Natural killer cell (primary cell): ENCODE measurements at regions of chr19 and their contacts with region 1.

Region 1: DNA sequence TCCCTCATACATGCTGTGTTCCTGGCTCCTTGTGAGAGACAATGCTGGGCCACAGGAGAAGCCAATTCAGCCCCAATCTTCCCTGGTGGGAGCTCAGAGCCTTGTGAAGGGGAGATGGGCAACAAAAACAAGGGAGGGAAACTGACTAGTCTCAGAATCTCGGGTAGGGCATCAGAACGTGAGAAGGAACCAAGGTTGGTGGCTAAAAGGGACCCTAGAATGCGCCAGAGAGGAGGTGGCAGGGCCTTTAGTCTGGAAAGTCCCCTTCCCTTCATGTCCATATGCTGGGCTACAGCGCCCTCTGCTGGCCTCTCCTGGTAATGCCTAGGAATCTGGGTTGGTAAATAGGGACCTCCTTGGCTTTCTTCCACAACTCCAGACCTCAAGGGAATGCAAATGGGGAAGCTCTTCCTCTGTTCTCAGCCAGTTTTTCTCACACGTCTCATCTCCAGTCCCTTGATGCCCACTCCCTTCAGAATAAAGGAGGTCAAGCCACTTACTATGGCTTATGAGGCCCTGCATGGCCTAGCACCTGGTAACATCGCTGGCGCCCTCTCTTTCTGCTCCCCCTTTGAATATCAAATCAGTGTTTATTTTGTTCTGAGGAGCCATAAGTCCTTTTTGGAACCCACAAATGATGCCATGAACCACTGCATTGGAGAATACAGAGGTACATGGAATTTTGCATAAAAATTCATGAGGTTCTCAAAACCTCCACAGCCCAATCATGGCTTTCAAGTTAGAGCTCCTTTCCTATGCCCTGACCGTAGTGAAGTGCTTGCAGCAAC is 1.4 kb upstream of the CCDC97 start:
- DNase-seq: peak; percentile 96 to 97
- ATAC-seq: peak; percentile 62 to 88 (median 66)
- H3K4me3 ChIP-seq: no peak overlapping the region
- H3K4me3 Mint-ChIP-seq: peak overlapping the region; percentile 96
- H3K27ac ChIP-seq: peak overlapping the region; percentile 97
- H3K27ac Mint-ChIP-seq: peak overlapping the region; percentile 91 to 94
- H3K4me1 ChIP-seq: peaks cover 76% of the 10 kb centered on the region
- H3K4me1 Mint-ChIP-seq: peaks cover 84% of the 10 kb centered on the region in 2 donors
- H3K27me3 ChIP-seq: no peaks in the 10 kb centered on the region
- H3K27me3 Mint-ChIP-seq: no peaks in the 10 kb centered on the region
- CTCF ChIP-seq: peak; percentile 90

Region 2: DNA sequence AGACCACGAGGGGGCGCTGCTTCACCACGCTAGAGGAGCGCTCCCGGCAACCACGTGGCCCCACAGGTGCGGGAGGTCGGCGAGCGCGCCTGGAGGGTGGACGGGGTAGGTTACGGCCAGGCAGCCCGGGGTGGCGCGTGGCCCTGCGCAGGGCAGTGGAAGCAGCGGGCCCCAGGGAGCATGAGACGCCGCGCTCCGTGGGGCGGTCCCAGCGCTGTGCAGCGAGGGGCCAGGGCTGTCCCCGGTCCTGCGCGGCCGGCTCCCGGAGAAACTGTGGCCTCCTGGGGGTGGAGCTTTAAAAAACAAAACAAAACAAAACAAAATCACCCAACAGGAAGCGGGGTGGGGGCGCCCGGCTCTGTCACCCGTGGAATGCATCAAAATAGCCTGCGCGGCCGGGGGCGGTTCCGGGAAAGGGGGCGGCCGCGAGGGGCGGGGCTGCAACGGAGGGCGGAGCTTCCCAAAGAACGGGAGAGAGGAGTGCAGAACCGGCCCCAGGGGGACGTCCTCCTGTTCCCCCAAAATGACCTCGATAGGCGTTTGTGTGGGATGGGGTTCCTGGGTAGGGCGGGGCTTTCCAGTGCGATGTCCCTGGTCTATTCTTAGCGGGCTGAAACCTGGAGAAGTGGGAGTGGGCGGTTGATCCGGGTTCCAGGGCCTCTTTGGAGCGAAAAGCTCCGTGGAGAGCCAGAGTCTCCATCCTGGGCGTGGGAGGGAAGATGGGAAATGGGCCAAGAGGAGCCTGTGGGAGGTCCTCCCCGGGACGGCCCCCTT is 645.5 kb before region 1 on chr19:
- intact Hi-C with region 1: loop called (anchors 2 kb)
- DNase-seq: peak; percentile 95 to 96
- ATAC-seq: peak; percentile 83 to 96 (median 89)
- H3K4me3 ChIP-seq: peak overlapping the region; percentile 55
- H3K4me3 Mint-ChIP-seq: peak overlapping the region; percentile 85
- H3K27ac ChIP-seq: peak overlapping the region; percentile 52
- H3K27ac Mint-ChIP-seq: peak overlapping the region; percentile 60 to 83
- H3K4me1 ChIP-seq: peaks cover 15% of the 10 kb centered on the region
- H3K4me1 Mint-ChIP-seq: peaks cover 0 to 17% of the 10 kb centered on the region in 2 donors
- H3K27me3 ChIP-seq: no peaks in the 10 kb centered on the region
- H3K27me3 Mint-ChIP-seq: no peaks in the 10 kb centered on the region
- CTCF ChIP-seq: peak; percentile 42

Region 3: DNA sequence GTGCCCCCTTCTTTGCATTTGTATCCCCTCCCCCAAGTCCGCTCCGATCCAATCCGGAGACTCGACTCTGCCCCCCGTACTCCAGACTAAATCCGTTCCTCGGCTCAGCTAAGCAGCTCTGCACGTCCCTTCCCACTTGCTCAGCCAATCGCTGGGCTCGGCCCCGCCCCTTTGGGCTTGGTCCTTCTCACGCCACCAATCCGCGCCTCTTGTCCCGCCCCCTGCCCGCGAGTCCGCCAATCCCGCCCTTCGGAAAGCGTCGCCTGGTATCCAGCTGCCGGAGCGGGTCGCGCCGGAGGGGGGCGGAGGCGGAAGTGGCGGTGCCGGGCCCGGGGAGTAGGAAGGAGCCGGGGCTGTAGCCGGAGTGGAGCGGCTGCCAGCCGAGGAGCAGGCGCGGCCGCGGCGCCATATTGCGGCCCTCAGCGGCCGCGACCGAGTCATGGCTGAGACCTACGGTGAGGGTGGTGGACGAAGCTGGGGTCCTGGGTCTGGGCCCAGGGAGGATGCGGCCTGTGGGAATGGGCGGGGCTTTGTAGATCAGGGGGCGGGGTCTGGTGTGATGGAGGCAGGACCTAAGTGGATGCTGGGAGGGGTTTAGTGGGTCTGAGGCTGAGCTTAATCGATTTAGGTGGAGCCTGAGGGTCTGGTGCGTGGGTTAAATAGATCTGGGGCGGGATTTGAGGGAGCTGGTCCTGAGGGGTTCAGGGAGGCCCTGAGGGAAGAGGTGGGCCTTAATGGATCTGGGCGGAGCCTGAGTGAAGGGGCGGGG is 530.5 kb before region 1 on chr19 and contains the start of gene RAB4B:
- intact Hi-C with region 1: no loop called
- DNase-seq: peak; percentile 100
- ATAC-seq: peak; percentile 80 to 93 (median 82)
- H3K4me3 ChIP-seq: peak within 1 kb of the TSS; percentile 92
- H3K4me3 Mint-ChIP-seq: peak within 1 kb of the TSS; percentile 97
- H3K27ac ChIP-seq: peak within 1 kb of the TSS; percentile 99
- H3K27ac Mint-ChIP-seq: peak within 1 kb of the TSS; percentile 95 to 96
- H3K4me1 ChIP-seq: peaks cover 26% of the 10 kb centered on the region
- H3K4me1 Mint-ChIP-seq: peaks cover 37 to 51% of the 10 kb centered on the region in 2 donors
- H3K27me3 ChIP-seq: no peaks in the 10 kb centered on the region
- H3K27me3 Mint-ChIP-seq: no peaks in the 10 kb centered on the region
- CTCF ChIP-seq: no peak
- total RNA-seq, gene RAB4B: 97.8 to 99.8 (median 98.6) TPM

Region 4: GRCh38 chr19:40974633-40975037 is 334.0 kb before region 1 on chr19:
- intact Hi-C with region 1: loop called (anchors 1 kb)
- DNase-seq: peak; percentile 71 to 94
- ATAC-seq: peak; percentile 83 to 94 (median 93)
- H3K4me3 ChIP-seq: no peak overlapping the region
- H3K4me3 Mint-ChIP-seq: no peak overlapping the region
- H3K27ac ChIP-seq: no peak overlapping the region
- H3K27ac Mint-ChIP-seq: no peak overlapping the region
- H3K4me1 ChIP-seq: peaks cover 9% of the 10 kb centered on the region
- H3K4me1 Mint-ChIP-seq: peaks cover 10 to 13% of the 10 kb centered on the region in 2 donors
- H3K27me3 ChIP-seq: no peaks in the 10 kb centered on the region
- H3K27me3 Mint-ChIP-seq: peaks cover 6 to 15% of the 10 kb centered on the region in 2 donors
- CTCF ChIP-seq: peak; percentile 91

Region 5: DNA sequence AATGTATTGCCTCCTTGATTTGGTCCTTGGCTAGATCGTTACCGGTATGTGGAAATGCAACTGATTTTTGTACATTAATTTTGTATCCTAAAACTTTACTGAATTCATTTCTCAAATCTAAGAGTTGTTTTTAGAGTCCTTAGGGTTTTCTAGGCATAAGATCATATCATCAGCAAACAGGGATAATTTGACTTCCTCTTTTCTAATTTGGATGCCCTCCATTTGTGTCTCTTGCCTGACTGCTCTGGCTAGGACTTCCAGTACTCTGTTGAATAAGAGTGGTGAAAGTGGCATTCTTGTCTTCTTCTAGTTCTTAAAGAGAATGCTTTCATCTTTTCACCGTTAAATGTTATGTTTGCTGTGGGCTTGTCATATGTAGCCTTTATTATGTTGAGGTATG is 232.3 kb before region 1 on chr19:
- intact Hi-C with region 1: no loop called
- DNase-seq: no peak
- ATAC-seq: no peak
- H3K4me3 ChIP-seq: no peak overlapping the region
- H3K4me3 Mint-ChIP-seq: no peak overlapping the region
- H3K27ac ChIP-seq: no peak overlapping the region
- H3K27ac Mint-ChIP-seq: no peak overlapping the region
- H3K4me1 ChIP-seq: no peaks in the 10 kb centered on the region
- H3K4me1 Mint-ChIP-seq: no peaks in the 10 kb centered on the region
- H3K27me3 ChIP-seq: peaks cover 2% of the 10 kb centered on the region
- H3K27me3 Mint-ChIP-seq: peaks cover 29 to 60% of the 10 kb centered on the region in 2 donors
- CTCF ChIP-seq: no peak

Region 6: DNA sequence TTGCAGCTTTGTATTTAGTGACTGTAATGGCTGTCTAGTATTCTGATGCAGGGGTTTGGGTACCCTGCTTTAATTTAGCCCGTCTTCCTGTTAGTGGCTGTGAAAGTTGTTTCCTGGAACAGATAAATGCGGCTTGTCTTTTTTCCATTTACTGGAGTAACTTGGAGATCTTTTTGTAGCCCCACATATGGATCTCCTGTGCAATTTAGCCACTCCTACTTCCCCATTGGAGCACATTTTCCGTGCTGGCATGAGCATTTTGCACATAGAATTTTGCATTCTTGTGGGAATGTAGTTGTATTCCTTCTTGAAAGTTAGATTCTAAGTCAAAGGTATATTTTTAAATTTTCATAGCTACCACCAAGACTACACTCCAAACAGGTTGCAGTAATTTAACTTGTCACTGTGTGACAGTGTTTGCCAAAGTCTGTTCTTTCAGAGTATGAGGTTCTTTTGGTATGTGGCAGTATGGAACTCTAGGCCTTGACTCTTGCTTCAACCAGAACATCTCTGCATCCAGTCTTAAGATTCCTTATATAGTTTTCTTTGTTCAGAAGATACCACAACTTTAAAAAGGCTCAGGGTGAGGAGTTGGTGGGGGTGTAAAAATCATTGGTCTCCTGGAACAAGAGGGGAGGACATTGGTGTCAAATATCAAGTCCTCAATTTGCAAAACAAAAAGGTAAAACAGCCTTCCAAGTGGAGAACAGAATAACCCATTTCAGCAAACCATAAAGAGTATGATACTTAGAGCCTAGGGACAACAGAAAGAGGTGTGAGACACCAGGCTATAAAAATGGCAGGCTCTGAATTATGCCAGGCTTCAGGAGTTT is 19.7 kb before region 1 on chr19:
- intact Hi-C with region 1: loop called (anchors 2 kb)
- DNase-seq: no peak
- ATAC-seq: peak in 2 of 3 donors; percentile 64 to 68
- H3K4me3 ChIP-seq: no peak overlapping the region
- H3K4me3 Mint-ChIP-seq: no peak overlapping the region
- H3K27ac ChIP-seq: no peak overlapping the region
- H3K27ac Mint-ChIP-seq: peak overlapping the region; percentile 56 to 65
- H3K4me1 ChIP-seq: no peaks in the 10 kb centered on the region
- H3K4me1 Mint-ChIP-seq: peaks cover 9 to 10% of the 10 kb centered on the region in 2 donors
- H3K27me3 ChIP-seq: no peaks in the 10 kb centered on the region
- H3K27me3 Mint-ChIP-seq: no peaks in the 10 kb centered on the region
- CTCF ChIP-seq: no peak

Region 7: DNA sequence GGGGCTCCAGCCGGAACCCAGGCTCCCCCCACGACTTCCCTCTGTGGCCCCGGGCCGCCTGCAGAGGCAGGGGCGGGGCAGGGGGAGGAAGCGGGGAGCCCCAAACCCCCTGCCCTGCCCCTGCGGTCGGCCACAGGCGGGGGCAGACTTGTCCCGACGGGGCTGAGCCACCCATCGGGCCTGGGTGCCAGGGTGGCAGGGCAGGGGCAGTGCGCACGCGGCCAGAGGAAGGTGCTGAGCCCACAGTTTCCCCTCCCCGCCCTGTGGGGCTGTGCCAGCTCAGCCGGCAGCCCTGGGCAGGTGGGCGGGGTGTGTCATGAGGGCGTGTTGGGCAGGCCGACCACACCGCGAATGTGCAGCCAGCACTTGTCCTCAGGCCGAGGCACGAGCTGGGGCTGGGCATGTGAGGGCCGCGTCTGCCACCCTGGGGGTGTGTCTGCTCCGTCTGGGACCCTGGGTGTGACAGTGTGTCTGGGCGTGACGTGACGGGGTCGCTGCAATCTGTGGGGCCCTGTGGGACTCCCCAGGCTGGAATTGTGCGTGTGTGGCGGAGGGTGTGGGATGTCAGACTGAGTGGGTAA is 19.1 kb after region 1 on chr19:
- intact Hi-C with region 1: loop called (anchors 1 kb)
- DNase-seq: peak; percentile 89 to 96
- ATAC-seq: peak; percentile 46 to 78 (median 61)
- H3K4me3 ChIP-seq: peak overlapping the region; percentile 25
- H3K4me3 Mint-ChIP-seq: peak overlapping the region; percentile 80
- H3K27ac ChIP-seq: peak overlapping the region; percentile 91
- H3K27ac Mint-ChIP-seq: peak overlapping the region; percentile 94 to 97
- H3K4me1 ChIP-seq: peaks cover 98% of the 10 kb centered on the region
- H3K4me1 Mint-ChIP-seq: peaks cover 83 to 88% of the 10 kb centered on the region in 2 donors
- H3K27me3 ChIP-seq: no peaks in the 10 kb centered on the region
- H3K27me3 Mint-ChIP-seq: no peaks in the 10 kb centered on the region
- CTCF ChIP-seq: no peak